H1 (cell line): ENCODE measurements at regions of chr2 and their contacts with region 1.

Region 1: DNA sequence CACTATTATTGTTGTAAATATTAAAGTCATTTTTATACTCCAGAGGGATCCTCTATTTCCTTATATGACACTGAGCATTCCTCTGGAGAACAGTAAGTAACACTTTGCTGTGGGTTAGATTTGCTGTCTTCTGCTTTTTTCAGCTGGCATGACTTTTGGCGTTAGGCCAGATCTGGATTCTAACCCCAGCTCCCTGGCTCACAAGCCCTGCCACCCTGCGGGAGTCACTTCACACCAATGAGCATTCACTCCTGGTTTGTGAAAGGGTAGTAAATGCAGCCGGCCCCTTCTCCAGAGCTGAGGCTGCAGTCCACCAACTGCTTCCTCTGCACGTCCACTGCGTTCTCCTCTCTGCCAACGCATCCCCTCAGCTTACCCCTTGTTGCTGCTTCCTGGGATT is 373.8 kb upstream of the RAB6C start:
- DNase-seq: no peak
- H3K4me3 ChIP-seq: no peak overlapping the region
- H3K27ac ChIP-seq: no peak overlapping the region
- H3K4me1 ChIP-seq: peaks cover 0 to 7% (median 3%) of the 10 kb centered on the region in 4 experiments; a peak in 3 of 7 replicates
- H3K27me3 ChIP-seq: no peaks in the 10 kb centered on the region; a peak in 2 of 7 replicates
- CTCF ChIP-seq: no peak
- EP300 ChIP-seq: no peak
- POLR2A ChIP-seq: no peak
- RAD21 ChIP-seq: no peak

Region 2: DNA sequence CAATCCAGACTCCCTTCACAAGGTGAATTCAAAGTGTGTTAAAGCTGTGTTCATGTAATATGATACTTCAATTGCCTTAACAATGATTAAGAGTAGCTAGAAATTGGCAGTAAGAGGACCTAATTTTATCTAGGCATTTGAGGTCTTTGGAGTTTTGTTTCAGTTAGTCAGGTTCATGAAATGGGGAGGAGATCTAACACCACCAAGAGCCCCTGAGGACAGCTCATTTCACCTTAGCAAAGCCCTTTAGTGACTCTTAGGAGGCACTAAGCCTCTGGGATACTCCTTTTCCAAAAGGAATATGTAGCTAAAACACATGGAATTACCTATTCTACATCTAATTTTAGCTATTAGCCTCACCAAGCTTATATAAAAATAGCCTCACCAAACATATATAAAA is 342.7 kb before region 1 on chr2:
- CTCF ChIA-PET with region 1: no interaction called
- POLR2A ChIA-PET with region 1: no interaction called
- DNase-seq: no peak
- H3K4me3 ChIP-seq: no peak overlapping the region
- H3K27ac ChIP-seq: no peak overlapping the region
- H3K4me1 ChIP-seq: no peaks in the 10 kb centered on the region
- H3K27me3 ChIP-seq: no peaks in the 10 kb centered on the region
- CTCF ChIP-seq: no peak
- EP300 ChIP-seq: no peak
- POLR2A ChIP-seq: no peak
- RAD21 ChIP-seq: no peak

Region 3: DNA sequence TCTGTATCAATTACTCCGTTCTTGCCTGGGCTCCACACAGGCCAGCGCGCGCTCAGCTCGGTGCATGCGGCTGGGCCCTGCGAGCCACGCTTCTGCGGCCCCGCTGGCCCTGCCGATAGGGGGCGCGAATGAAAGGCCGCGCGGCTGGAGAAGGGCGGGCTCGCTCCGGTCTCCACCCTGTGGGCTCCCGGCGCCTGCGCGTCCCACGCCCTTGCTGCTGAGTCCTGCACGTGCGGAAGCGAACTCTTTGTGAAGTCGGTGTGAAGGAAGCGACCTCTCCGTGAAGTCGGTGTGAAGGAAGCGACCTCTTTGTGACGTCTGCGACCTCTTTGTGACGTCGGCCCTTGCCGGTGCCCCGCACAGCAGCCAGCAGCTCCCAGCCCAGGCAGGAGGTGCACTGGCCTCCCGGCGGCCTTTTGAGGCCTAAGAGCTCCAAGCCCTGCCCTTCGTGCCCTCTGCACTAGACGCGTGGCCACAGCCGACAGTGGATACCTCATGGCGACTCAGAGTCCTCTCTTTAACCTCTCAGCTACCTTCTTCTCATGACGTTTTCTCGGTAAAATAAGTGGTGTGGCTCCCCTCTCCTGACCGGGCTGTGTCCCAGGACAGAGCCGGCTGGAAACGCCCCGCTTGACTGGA is 18.1 kb before region 1 on chr2:
- CTCF ChIA-PET with region 1: interaction called, 19 read pairs
- POLR2A ChIA-PET with region 1: no interaction called
- DNase-seq: peak; percentile 44 to 87
- H3K4me3 ChIP-seq: no peak overlapping the region
- H3K27ac ChIP-seq: no peak overlapping the region
- H3K4me1 ChIP-seq: no peaks in the 10 kb centered on the region; a peak in 1 of 7 replicates
- H3K27me3 ChIP-seq: peaks cover 0 to 16% (median 9%) of the 10 kb centered on the region in 4 experiments; a peak in 6 of 7 replicates
- CTCF ChIP-seq: peak; percentile 73 to 90 (median 78)
- EP300 ChIP-seq: no peak
- POLR2A ChIP-seq: no peak
- RAD21 ChIP-seq: peak; percentile 55 to 64

Region 4: DNA sequence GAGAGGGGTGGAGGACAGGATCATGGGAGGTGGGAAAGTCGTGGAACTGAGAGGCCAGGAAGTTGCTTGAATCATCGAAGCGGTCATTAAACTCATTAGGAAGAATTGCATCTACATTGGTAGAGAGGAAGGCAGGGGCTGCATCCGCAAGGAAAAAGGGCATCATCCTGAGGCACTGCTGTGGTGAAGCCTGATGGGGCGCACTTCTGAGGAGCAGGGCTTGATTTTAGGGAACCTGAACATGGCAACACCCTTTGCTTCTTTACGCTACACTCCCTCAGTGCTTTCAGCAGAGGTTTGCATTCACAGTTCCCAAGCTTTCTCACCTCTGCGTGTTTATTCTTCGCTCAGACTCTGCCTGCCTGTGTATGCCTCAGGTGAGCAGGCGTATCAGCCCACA is 21.8 kb after region 1 on chr2:
- CTCF ChIA-PET with region 1: no interaction called
- POLR2A ChIA-PET with region 1: no interaction called
- DNase-seq: no peak
- H3K4me3 ChIP-seq: no peak overlapping the region
- H3K27ac ChIP-seq: no peak overlapping the region; the same call in 1 of the 2 replicates
- H3K4me1 ChIP-seq: peaks cover 0 to 3% (median 0%) of the 10 kb centered on the region in 4 experiments; a peak in 1 of 7 replicates
- H3K27me3 ChIP-seq: no peaks in the 10 kb centered on the region
- CTCF ChIP-seq: peak in 2 of 3 experiments; percentile 41 to 55; a peak in 2 of 4 replicates
- EP300 ChIP-seq: no peak
- POLR2A ChIP-seq: no peak
- RAD21 ChIP-seq: peak in 1 of 2 experiments; percentile 5; a peak in 1 of 4 replicates